PC-3 (cell line): ENCODE measurements at regions of chr2 and their contacts with region 1.

Region 1: GRCh38 chr2:186903216-186903615 is 54.2 kb upstream of the ZSWIM2 start:
- DNase-seq: peak; percentile 38
- ATAC-seq: no peak
- H3K4me3 ChIP-seq: no peak overlapping the region
- H3K27ac ChIP-seq: no peak overlapping the region
- H3K4me1 ChIP-seq: no peaks in the 10 kb centered on the region
- H3K27me3 ChIP-seq: no peaks in the 10 kb centered on the region
- CTCF ChIP-seq: peak; percentile 75

Region 2: DNA sequence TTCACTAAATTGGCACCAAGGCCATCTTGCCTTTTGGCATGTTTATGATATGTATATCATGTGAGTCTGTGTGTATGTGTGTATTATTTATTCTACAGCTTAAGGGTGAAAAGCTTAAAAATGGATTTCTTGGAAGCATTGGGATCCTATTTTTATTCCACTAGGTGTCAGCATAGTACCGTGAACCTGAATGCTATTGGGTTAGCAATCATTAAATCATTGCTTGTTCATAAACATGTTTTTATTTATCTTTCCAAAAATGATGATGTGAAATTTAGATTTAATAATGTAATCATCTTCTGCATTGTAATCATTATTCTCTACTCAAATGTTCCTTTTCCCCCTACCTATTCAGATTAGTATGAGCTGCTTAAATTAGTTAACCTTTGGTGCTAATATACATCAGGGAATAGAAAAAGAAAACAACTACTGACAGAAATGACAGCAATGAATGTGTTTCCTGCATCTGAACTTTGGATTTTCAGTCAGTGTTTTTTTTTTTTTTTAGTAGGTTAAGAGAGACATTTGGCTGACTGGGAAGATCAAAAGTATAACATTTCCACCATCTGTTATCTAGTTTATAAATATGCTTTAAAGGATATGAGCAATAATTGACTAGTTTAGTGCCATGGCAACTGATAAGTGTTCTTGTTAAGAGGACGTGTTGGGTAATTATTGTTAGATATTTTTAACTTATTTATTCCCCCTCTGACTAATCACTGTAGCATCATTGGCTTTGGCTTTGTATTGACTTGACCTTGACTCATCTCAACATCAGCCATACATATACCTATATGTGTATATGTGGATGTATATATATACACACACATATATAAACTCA is 40.1 kb before region 1 on chr2:
- CTCF ChIA-PET with region 1: interaction called, 5 read pairs
- POLR2A ChIA-PET with region 1: no interaction called
- intact Hi-C with region 1: loop called (anchors 5 kb)
- DNase-seq: peak; percentile 71
- ATAC-seq: peak; percentile 78
- H3K4me3 ChIP-seq: no peak overlapping the region
- H3K27ac ChIP-seq: no peak overlapping the region
- H3K4me1 ChIP-seq: no peaks in the 10 kb centered on the region
- H3K27me3 ChIP-seq: peaks cover 3% of the 10 kb centered on the region; the same call in 1 of the 2 replicates
- CTCF ChIP-seq: peak; percentile 89

Region 3: DNA sequence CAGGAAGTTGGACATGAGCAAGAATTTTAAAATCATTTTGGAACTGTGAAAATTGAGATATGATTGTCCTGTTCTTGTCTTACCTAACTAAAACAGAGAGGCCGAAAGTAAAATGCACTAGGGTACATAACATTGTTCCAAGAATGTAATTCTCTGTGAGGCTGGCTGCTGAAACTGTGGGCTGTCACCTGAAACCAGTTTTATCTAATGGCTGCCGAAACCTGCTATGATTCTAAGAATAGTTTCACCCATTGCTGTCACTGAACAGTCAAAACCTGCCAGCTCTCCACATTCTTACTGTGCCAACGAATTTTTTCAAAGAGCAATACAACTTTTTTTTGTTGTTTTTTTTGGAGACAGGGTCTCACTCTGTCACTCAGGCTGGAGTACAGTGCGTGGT is 65.1 kb after region 1 on chr2:
- CTCF ChIA-PET with region 1: no interaction called
- POLR2A ChIA-PET with region 1: no interaction called
- intact Hi-C with region 1: no loop called
- DNase-seq: no peak
- ATAC-seq: no peak
- H3K4me3 ChIP-seq: no peak overlapping the region
- H3K27ac ChIP-seq: no peak overlapping the region
- H3K4me1 ChIP-seq: no peaks in the 10 kb centered on the region
- H3K27me3 ChIP-seq: no peaks in the 10 kb centered on the region
- CTCF ChIP-seq: no peak

Region 4: GRCh38 chr2:187037310-187037709 is 134.1 kb after region 1 on chr2:
- CTCF ChIA-PET with region 1: no interaction called
- POLR2A ChIA-PET with region 1: no interaction called
- intact Hi-C with region 1: loop called (anchors 10 kb)
- DNase-seq: peak; percentile 51
- ATAC-seq: peak; percentile 50
- H3K4me3 ChIP-seq: no peak overlapping the region
- H3K27ac ChIP-seq: no peak overlapping the region
- H3K4me1 ChIP-seq: peaks cover 9% of the 10 kb centered on the region
- H3K27me3 ChIP-seq: no peaks in the 10 kb centered on the region
- CTCF ChIP-seq: 0 out of 2 replicates have a peak, but pooled peaks have one; percentile 11

Region 5: GRCh38 chr2:187299122-187299906 is 396.1 kb after region 1 on chr2:
- CTCF ChIA-PET with region 1: no interaction called
- POLR2A ChIA-PET with region 1: no interaction called
- intact Hi-C with region 1: loop called (anchors 2 kb)
- DNase-seq: peak; percentile 27
- ATAC-seq: peak; percentile 27; the same call in 1 of the 2 replicates
- H3K4me3 ChIP-seq: no peak overlapping the region
- H3K27ac ChIP-seq: no peak overlapping the region
- H3K4me1 ChIP-seq: no peaks in the 10 kb centered on the region
- H3K27me3 ChIP-seq: no peaks in the 10 kb centered on the region
- CTCF ChIP-seq: peak; percentile 59